Endothelial cell of umbilical vein (primary cell): ENCODE measurements at regions of chr11 and their contacts with region 1.

Region 1: DNA sequence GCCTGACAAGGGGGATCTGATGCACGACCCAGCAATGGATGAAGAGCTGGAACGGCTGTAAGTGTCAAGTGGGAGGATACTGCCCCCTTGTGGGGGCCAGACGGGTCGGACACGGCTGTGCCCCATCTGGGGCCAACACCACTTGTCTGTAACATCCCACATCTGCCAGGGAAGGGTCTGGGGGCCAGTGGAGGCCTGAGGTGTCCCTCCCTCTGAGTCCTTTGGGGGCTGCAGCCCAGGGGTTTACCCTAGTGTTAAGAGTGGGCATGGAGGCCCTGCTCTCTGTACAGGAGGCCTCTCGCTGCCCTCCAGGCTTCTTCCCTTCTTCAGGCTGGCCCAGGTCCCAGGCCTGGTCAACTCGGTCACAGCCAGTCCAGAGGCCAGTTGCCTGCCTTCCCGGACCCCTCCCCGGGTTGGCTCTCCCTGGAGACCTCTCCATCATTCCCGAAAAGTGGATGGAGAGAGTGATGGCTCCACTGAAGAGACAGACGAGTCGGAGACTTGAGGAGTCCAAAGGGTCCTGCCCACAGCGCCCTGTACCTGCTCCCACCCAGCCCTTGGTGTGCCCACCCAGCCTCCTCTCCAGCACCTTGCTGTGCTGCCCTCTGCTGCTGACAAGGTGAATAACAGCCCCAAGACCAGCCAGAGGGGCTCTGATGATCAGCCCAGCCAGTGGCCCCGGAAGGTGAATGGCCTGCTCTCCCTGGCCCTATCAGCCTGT is 15.4 kb downstream of the ARFGAP2 start:
- DNase-seq: peak; percentile 52
- H3K4me3 ChIP-seq: no peak overlapping the region
- H3K27ac ChIP-seq: no peak overlapping the region
- H3K4me1 ChIP-seq: no peaks in the 10 kb centered on the region
- H3K27me3 ChIP-seq: no peaks in the 10 kb centered on the region
- CTCF ChIP-seq: peak; percentile 80 to 87
- POLR2A ChIP-seq: no peak

Region 2: GRCh38 chr11:46889689-46890475 is 271.4 kb before region 1 on chr11:
- CTCF ChIA-PET with region 1: interaction called, 10 read pairs
- POLR2A ChIA-PET with region 1: no interaction called
- dilution Hi-C with region 1: no loop called
- intact Hi-C with region 1: loop called (anchors 1 kb)
- DNase-seq: peak; percentile 72
- H3K4me3 ChIP-seq: no peak overlapping the region
- H3K27ac ChIP-seq: no peak overlapping the region
- H3K4me1 ChIP-seq: no peaks in the 10 kb centered on the region
- H3K27me3 ChIP-seq: no peaks in the 10 kb centered on the region
- CTCF ChIP-seq: peak; percentile 75 to 81
- POLR2A ChIP-seq: no peak

Region 3: GRCh38 chr11:47139878-47140277 is 21.4 kb before region 1 on chr11:
- CTCF ChIA-PET with region 1: no interaction called
- POLR2A ChIA-PET with region 1: no interaction called
- dilution Hi-C with region 1: no loop called
- intact Hi-C with region 1: no loop called
- DNase-seq: no peak
- H3K4me3 ChIP-seq: no peak overlapping the region
- H3K27ac ChIP-seq: no peak overlapping the region
- H3K4me1 ChIP-seq: no peaks in the 10 kb centered on the region
- H3K27me3 ChIP-seq: no peaks in the 10 kb centered on the region
- CTCF ChIP-seq: no peak
- POLR2A ChIP-seq: no peak

Region 4: GRCh38 chr11:47191865-47192521 is 30.7 kb after region 1 on chr11:
- CTCF ChIA-PET with region 1: no interaction called
- POLR2A ChIA-PET with region 1: no interaction called
- dilution Hi-C with region 1: no loop called
- intact Hi-C with region 1: no loop called
- DNase-seq: no peak
- H3K4me3 ChIP-seq: no peak overlapping the region
- H3K27ac ChIP-seq: no peak overlapping the region
- H3K4me1 ChIP-seq: peaks cover 4% of the 10 kb centered on the region
- H3K27me3 ChIP-seq: peaks cover 0 to 3% of the 10 kb centered on the region in 2 experiments
- CTCF ChIP-seq: no peak
- POLR2A ChIP-seq: no peak